Esophagus muscularis mucosa (tissue), 4 donors: ENCODE measurements at regions of chr2 and their contacts with region 1.

Region 1: DNA sequence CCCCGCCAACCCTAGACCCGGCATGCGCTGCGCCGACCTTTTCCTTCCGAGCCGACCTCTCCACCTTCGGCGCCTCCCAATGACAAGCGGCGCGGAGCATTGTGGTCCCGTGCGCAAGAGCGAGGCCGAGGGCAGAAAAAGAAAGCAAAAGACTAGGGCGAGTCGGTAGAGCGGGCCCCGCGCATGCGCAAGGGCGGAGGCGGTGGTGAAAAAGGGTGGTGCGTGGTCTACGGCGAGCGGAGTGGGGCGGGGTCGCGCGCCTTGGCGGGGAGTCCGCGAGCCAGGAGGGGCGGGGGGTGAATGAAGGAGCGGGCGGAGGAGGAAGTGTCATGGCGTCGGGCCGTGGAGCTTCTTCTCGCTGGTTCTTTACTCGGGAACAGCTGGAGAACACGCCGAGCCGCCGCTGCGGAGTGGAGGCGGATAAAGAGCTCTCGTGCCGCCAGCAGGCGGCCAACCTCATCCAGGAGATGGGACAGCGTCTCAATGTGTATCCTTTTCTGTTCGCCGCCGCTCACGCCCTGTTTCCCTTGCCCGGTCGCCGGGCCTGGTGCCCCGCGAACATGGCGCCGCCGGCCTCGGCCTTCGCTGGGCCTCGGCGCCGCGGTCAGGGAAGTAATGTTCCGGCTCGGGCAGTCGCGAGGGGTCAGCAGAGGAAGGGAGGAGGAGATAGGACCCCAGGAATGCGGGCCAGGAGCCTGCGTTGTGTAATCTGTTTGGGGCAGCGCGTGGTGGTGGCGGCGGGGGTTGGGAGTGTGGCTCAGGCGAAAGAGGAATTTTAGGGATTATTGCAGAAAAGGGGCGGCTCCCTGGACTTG is at the start of gene CCNT2:
- DNase-seq: peak; percentile 100
- H3K4me3 ChIP-seq: peak within 1 kb of the TSS; percentile 76 to 94 (median 92)
- H3K27ac ChIP-seq: peak within 1 kb of the TSS; percentile 96 to 98 (median 96)
- H3K4me1 ChIP-seq: peaks cover 41 to 52% (median 48%) of the 10 kb centered on the region in 4 donors
- H3K27me3 ChIP-seq: no peaks in the 10 kb centered on the region
- CTCF ChIP-seq: no peak
- EP300 ChIP-seq: no peak
- POLR2A ChIP-seq: no peak
- total RNA-seq, gene CCNT2: 16.1 to 29.1 (median 20.5) TPM

Region 2: DNA sequence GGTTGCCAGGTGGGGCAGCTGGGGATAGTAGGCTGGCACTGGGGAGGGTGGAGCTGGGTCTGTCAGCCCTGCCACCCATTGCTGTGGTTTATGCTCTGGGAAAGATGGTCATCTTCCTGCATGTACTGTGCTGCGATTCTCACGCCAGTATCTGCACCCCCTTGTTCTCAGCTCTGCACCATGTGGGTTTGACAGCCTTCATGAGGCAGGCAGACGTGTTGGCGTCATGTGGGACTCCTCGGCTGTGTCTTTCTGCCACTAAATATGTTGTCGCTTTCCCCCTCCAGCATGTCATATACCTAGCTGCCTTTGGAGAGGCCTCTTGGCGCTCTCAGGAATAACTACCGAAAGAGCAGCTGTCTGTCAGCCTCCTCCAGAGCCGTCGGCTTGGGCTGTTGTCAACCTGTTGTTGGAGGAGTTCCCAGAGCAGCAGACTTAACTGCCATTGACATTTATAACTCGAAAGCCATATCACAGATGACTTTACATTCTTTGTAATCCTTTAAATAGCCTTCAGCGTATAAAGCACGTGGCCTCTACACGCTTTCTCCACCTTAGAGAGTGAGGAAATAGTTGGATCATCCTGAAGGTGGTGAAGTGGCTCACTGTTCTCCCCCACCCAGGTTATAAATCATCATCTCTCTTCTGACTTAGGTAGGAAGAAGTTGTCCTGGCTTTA is 745.3 kb before region 1 on chr2:
- intact Hi-C with region 1: no loop called
- DNase-seq: no peak
- H3K4me3 ChIP-seq: no peak overlapping the region
- H3K27ac ChIP-seq: no peak overlapping the region
- H3K4me1 ChIP-seq: peaks cover 41 to 59% (median 48%) of the 10 kb centered on the region in 4 donors
- H3K27me3 ChIP-seq: no peaks in the 10 kb centered on the region
- CTCF ChIP-seq: no peak
- EP300 ChIP-seq: no peak
- POLR2A ChIP-seq: no peak

Region 3: GRCh38 chr2:134375935-134376334 is 542.8 kb before region 1 on chr2:
- intact Hi-C with region 1: loop called (anchors 2 kb)
- DNase-seq: no peak
- H3K4me3 ChIP-seq: no peak overlapping the region
- H3K27ac ChIP-seq: peak overlapping the region; percentile 73 to 82 (median 82)
- H3K4me1 ChIP-seq: peaks cover 56 to 62% (median 59%) of the 10 kb centered on the region in 4 donors
- H3K27me3 ChIP-seq: no peaks in the 10 kb centered on the region
- CTCF ChIP-seq: peak; percentile 36 to 60 (median 49)
- EP300 ChIP-seq: no peak
- POLR2A ChIP-seq: no peak

Region 4: DNA sequence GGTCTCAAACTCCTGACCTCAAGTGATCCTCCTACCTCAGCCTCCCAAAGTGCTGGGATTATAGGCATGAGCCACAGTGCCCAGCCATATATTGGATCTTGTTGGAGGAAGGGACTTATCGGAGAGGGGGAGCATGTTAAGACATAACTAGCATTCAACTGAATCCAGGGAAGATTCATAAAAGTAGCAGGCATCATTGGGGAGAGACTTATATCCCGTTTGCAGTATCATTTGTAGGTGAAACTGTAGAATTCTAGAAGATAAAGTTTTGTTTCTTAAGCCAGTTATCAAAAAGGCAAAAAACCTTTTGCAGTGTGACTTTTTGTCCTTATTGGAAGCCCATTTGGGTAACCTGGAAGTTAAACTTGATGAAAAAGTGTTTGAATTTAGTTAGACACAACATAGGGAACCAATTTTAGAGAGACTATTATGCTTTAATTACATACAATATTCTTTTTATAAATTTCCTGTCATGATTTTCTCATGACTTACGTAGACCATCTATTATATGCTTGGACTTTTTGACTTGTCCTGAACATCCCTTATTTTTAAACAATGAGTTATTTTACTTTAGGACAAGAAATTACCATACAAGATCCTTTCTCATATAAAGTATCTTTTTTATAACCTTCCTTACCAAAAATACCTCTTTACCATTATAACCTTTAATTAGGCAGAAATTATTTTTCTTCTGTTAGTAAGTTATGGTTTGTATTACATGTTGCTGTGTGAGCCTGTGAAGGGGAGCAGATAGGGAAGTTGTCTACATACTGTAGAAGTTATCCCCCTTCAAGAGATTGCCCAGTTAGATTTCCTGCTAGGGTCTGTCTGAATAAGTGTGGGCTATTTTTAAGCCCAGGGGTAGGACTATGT is 153.6 kb after region 1 on chr2:
- intact Hi-C with region 1: no loop called
- DNase-seq: no peak
- H3K4me3 ChIP-seq: no peak overlapping the region
- H3K27ac ChIP-seq: no peak overlapping the region
- H3K4me1 ChIP-seq: peaks cover 4 to 28% (median 18%) of the 10 kb centered on the region in 4 donors
- H3K27me3 ChIP-seq: no peaks in the 10 kb centered on the region
- CTCF ChIP-seq: no peak
- EP300 ChIP-seq: no peak
- POLR2A ChIP-seq: no peak

Region 5: GRCh38 chr2:135531231-135532228 is 612.8 kb after region 1 on chr2 and contains the start of gene R3HDM1:
- intact Hi-C with region 1: loop called (anchors 5 kb)
- DNase-seq: peak; percentile 100
- H3K4me3 ChIP-seq: peak within 1 kb of the TSS; percentile 89 to 94 (median 90)
- H3K27ac ChIP-seq: peak within 1 kb of the TSS; percentile 89 to 93 (median 90)
- H3K4me1 ChIP-seq: peaks cover 6 to 30% (median 22%) of the 10 kb centered on the region in 4 donors
- H3K27me3 ChIP-seq: no peaks in the 10 kb centered on the region
- CTCF ChIP-seq: no peak
- EP300 ChIP-seq: no peak
- POLR2A ChIP-seq: no peak
- total RNA-seq, gene R3HDM1: 13.1 to 56.6 (median 19.6) TPM